Natural killer cell (primary cell): ENCODE measurements at regions of chr9 and their contacts with region 1.

Region 1: GRCh38 chr9:98074115-98074990 is 17.8 kb downstream of the NANS start:
- DNase-seq: peak; percentile 61 to 83
- ATAC-seq: peak; percentile 73 to 85 (median 76)
- H3K4me3 ChIP-seq: no peak overlapping the region
- H3K4me3 Mint-ChIP-seq: no peak overlapping the region
- H3K27ac ChIP-seq: no peak overlapping the region
- H3K27ac Mint-ChIP-seq: peak overlapping the region in 1 of 2 donors; percentile 27
- H3K4me1 ChIP-seq: peaks cover 18% of the 10 kb centered on the region
- H3K4me1 Mint-ChIP-seq: peaks cover 0 to 12% of the 10 kb centered on the region in 2 donors
- H3K27me3 ChIP-seq: no peaks in the 10 kb centered on the region
- H3K27me3 Mint-ChIP-seq: no peaks in the 10 kb centered on the region
- CTCF ChIP-seq: peak; percentile 98

Region 2: DNA sequence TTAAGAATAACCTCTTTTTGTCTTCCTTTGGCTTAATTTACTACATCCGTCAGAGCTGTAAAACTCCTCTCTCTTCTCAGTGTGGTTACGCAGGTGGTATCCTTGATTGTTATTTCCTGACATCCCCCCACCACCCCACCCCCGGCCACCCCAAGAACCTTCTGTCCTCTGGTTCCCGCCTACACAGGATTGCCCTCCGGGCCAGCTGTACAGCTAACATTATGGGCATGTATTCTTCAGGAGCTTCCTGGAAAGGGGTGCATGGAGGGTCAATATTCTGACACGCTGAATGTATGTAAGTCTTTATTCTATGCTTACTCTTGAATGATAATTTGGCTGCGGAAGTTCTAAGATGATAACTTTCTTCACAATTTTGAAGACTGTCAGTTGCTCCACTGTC is 104.2 kb before region 1 on chr9:
- intact Hi-C with region 1: no loop called
- DNase-seq: peak in 1 of 2 donors; percentile 30
- ATAC-seq: no peak
- H3K4me3 ChIP-seq: no peak overlapping the region
- H3K4me3 Mint-ChIP-seq: no peak overlapping the region
- H3K27ac ChIP-seq: no peak overlapping the region
- H3K27ac Mint-ChIP-seq: no peak overlapping the region
- H3K4me1 ChIP-seq: no peaks in the 10 kb centered on the region
- H3K4me1 Mint-ChIP-seq: no peaks in the 10 kb centered on the region
- H3K27me3 ChIP-seq: no peaks in the 10 kb centered on the region
- H3K27me3 Mint-ChIP-seq: peaks cover 6 to 11% of the 10 kb centered on the region in 2 donors
- CTCF ChIP-seq: no peak

Region 3: GRCh38 chr9:98034593-98035546 is 39.5 kb before region 1 on chr9:
- intact Hi-C with region 1: no loop called
- DNase-seq: peak; percentile 82 to 97
- ATAC-seq: peak; percentile 96 to 100 (median 100)
- H3K4me3 ChIP-seq: no peak overlapping the region
- H3K4me3 Mint-ChIP-seq: no peak overlapping the region
- H3K27ac ChIP-seq: no peak overlapping the region
- H3K27ac Mint-ChIP-seq: peak overlapping the region in 1 of 2 donors; percentile 42
- H3K4me1 ChIP-seq: peaks cover 4% of the 10 kb centered on the region
- H3K4me1 Mint-ChIP-seq: peaks cover 7 to 9% of the 10 kb centered on the region in 2 donors
- H3K27me3 ChIP-seq: no peaks in the 10 kb centered on the region
- H3K27me3 Mint-ChIP-seq: peaks cover 0 to 5% of the 10 kb centered on the region in 2 donors
- CTCF ChIP-seq: peak; percentile 78

Region 4: GRCh38 chr9:98118640-98119601 is 44.6 kb after region 1 on chr9 and contains the start of gene TRIM14:
- intact Hi-C with region 1: loop called (anchors 2 kb)
- DNase-seq: peak; percentile 55 to 73
- ATAC-seq: peak; percentile 74 to 78 (median 75)
- H3K4me3 ChIP-seq: peak within 1 kb of the TSS; percentile 48
- H3K4me3 Mint-ChIP-seq: peak within 1 kb of the TSS; percentile 91
- H3K27ac ChIP-seq: peak within 1 kb of the TSS; percentile 81
- H3K27ac Mint-ChIP-seq: peak within 1 kb of the TSS; percentile 92 to 95
- H3K4me1 ChIP-seq: peaks cover 30% of the 10 kb centered on the region
- H3K4me1 Mint-ChIP-seq: peaks cover 33 to 34% of the 10 kb centered on the region in 2 donors
- H3K27me3 ChIP-seq: no peaks in the 10 kb centered on the region
- H3K27me3 Mint-ChIP-seq: no peaks in the 10 kb centered on the region
- CTCF ChIP-seq: no peak
- total RNA-seq, gene TRIM14: 45.1 to 66.5 (median 65.3) TPM

Region 5: DNA sequence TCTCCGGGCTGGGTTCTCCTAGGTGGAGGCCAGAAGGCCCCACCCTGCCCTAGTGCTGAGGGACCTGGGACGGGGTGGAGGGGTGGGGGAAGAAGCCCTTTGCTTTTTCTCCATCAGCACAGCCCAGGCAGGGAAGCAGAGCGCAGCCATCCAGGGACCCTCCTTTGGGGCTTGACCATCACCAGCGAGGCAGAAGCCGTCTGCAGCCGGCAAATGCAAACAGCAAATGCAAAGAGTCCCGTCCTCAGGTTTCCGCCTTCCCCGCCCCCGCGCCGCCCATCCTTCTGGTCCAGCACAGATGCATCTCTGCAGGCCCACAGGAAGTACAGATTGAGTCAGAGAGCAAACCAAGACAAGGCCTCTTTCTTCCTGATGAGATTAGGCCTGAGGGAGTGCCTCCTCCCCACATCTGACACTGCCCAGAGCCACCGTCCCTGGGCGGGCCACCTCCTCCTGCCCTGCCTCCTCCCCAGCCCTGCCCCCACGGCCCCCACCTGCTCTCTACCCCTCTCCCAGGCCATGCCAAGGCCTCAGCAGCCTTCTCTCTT is 94.7 kb after region 1 on chr9:
- intact Hi-C with region 1: no loop called
- DNase-seq: peak in 1 of 2 donors; percentile 46
- ATAC-seq: peak; percentile 49 to 86 (median 66)
- H3K4me3 ChIP-seq: no peak overlapping the region
- H3K4me3 Mint-ChIP-seq: no peak overlapping the region
- H3K27ac ChIP-seq: peak overlapping the region; percentile 61
- H3K27ac Mint-ChIP-seq: peak overlapping the region; percentile 34 to 88
- H3K4me1 ChIP-seq: peaks cover 31% of the 10 kb centered on the region
- H3K4me1 Mint-ChIP-seq: peaks cover 4 to 14% of the 10 kb centered on the region in 2 donors
- H3K27me3 ChIP-seq: no peaks in the 10 kb centered on the region
- H3K27me3 Mint-ChIP-seq: no peaks in the 10 kb centered on the region
- CTCF ChIP-seq: no peak

Region 6: DNA sequence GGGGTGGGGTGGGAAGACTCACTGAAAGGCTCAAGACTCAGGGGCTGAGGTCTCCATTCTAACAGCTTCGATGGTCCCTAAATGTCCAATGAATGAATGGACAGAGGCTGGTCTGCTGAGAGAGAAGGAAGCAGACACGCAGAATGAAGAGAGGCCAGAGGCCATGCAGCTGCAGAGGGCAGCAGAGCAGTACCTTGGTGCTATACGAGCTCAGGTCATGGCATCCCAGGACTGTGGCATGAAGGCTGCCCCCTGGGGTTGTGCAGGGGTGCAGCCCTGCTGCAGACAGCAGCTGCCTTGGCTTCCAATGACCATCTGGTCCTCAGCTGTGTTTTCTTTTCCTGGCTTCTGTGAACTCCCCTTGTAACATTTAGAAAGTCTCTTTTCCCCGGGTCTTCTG is 133.3 kb after region 1 on chr9:
- intact Hi-C with region 1: loop called (anchors 5 kb)
- DNase-seq: no peak
- ATAC-seq: no peak
- H3K4me3 ChIP-seq: no peak overlapping the region
- H3K4me3 Mint-ChIP-seq: no peak overlapping the region
- H3K27ac ChIP-seq: no peak overlapping the region
- H3K27ac Mint-ChIP-seq: no peak overlapping the region
- H3K4me1 ChIP-seq: peaks cover 9% of the 10 kb centered on the region
- H3K4me1 Mint-ChIP-seq: no peaks in the 10 kb centered on the region
- H3K27me3 ChIP-seq: no peaks in the 10 kb centered on the region
- H3K27me3 Mint-ChIP-seq: no peaks in the 10 kb centered on the region
- CTCF ChIP-seq: no peak

Region 7: DNA sequence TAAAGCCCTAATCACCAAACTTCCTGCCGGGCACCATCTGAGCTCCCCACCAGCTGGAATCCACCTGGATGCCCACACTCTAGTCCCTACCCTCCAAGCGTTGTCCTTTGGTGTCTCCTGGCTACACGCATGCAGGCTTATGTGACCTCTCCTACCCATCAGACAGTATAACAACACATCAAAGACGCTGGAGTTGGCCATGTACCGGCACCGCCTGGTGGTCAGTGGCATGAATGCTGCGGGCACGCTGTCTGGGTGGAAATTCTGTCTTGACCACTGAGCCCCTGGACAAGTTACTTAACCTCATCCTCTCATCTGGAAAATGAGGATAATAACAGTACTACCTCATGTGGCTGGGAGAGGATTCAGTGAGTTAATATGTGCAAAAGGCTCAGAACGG is 141.5 kb after region 1 on chr9:
- intact Hi-C with region 1: loop called (anchors 1 kb)
- DNase-seq: peak in 1 of 2 donors; percentile 43
- ATAC-seq: peak in 1 of 3 donors; percentile 49
- H3K4me3 ChIP-seq: no peak overlapping the region
- H3K4me3 Mint-ChIP-seq: no peak overlapping the region
- H3K27ac ChIP-seq: no peak overlapping the region
- H3K27ac Mint-ChIP-seq: no peak overlapping the region
- H3K4me1 ChIP-seq: no peaks in the 10 kb centered on the region
- H3K4me1 Mint-ChIP-seq: no peaks in the 10 kb centered on the region
- H3K27me3 ChIP-seq: no peaks in the 10 kb centered on the region
- H3K27me3 Mint-ChIP-seq: no peaks in the 10 kb centered on the region
- CTCF ChIP-seq: no peak

Region 8: DNA sequence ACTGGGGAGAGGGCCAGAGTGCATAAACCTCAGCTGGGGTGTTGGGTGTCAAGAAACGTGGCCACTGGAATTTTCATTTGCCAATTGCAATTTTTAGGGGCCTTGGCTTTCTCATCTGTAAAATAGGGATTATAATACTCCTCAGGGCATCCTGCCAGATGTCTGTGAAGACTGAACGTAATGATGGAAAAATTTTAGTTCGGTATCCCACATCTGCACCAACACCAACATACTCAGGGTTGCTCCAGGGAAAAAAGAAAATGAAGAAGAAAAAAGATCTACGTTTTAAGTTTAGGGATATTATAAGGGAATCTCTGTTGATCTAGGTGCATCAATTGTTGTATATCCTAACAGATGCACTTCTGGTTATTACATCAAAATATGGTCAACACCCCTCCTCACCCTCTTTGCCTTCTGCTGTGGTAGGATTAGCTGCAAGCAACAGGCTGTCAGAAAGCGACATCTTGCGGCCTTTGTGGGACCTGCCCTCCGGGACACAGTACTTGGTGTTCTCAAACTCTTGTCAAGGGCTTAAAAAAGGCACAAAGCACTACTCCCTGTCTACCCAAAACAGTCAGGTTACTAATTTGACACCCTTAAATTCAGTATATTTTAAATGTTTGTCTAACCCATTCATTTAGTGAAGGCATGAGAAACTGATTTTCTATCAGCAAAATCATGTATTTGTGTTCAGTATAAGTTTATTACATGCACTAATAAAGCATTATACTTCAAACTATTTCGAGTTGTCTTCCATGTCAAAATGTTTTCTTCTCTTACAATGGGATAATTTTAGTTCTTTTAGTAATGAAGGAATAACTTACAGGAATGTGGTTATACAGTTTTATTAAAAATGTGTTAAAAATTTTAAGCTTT is 189.4 kb after region 1 on chr9:
- intact Hi-C with region 1: loop called (anchors 1 kb)
- DNase-seq: peak; percentile 67 to 90
- ATAC-seq: peak; percentile 93 to 100 (median 100)
- H3K4me3 ChIP-seq: no peak overlapping the region
- H3K4me3 Mint-ChIP-seq: no peak overlapping the region
- H3K27ac ChIP-seq: no peak overlapping the region
- H3K27ac Mint-ChIP-seq: no peak overlapping the region
- H3K4me1 ChIP-seq: no peaks in the 10 kb centered on the region
- H3K4me1 Mint-ChIP-seq: no peaks in the 10 kb centered on the region
- H3K27me3 ChIP-seq: no peaks in the 10 kb centered on the region
- H3K27me3 Mint-ChIP-seq: peaks cover under 1 to 12% of the 10 kb centered on the region in 2 donors
- CTCF ChIP-seq: peak; percentile 94